ENCODE measurements at regions of chr13 and their contacts with region 1.

Region 1: DNA sequence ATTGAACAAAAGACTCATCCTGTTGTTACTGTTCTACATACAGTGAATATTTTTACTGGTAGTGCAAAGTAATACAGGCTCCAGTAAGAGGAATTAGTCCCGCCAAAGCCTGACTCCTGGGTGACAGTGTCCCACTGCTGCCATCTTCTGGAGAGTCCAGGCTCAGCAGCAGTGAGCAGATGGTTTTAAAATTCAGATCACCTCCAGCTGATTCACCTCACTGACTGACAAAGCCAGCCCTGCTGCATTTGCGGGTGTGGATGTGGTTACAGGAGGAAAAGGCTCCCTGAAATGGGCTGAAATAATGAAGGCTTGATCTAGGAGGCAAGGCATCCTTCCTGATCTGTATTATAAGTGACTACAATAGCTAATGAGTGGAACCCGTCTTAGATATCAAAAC is 18.3 kb downstream of the PABPC3 start:
- DNase-seq: no peak
- ATAC-seq: peak; percentile 70

Region 2: GRCh38 chr13:23888658-23889614 is 1225.3 kb before region 1 on chr13 and contains the start of gene MIPEP:
- intact Hi-C with region 1: no loop called
- DNase-seq: peak; percentile 96
- ATAC-seq: peak; percentile 99
- total RNA-seq, gene MIPEP: 37.7 TPM

Region 3: DNA sequence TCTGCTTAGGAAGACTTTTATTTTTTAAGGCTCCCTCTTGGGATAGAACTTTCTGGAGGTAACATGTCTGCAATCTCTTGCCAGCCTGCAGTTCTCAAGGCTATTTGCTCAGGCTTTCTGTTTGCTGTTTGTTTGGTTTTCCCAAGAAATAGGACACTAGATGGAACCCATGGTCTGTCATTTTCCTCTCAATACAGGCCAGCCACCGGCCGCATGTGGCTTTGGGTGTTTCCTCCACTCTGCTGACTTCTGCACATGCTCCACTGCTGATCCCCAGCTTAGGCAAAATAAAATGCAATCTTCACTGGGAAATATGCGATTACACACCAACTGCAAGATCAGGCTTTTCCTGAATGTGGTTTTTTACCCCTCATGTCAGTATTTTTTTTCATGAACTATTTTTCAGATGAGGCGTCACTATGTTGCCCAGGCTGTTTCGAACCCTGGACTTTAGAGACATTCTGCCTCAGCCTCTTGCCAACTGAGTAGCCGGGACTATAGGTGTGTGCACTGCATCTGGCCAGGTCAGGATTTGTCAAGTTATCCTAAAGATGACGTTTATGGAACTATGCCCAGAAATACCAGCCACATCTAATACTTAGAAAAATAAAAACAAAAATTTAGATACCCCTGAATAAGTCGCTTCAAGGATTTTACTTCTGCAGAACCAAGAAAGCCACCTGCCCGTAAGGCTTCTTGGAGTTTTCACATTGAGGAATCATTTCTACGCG is 112.6 kb before region 1 on chr13:
- intact Hi-C with region 1: loop called (anchors 5 kb)
- DNase-seq: no peak
- ATAC-seq: no peak

Region 4: GRCh38 chr13:25085125-25085742 is 29.0 kb before region 1 on chr13:
- intact Hi-C with region 1: loop called (anchors 1 kb)
- DNase-seq: no peak
- ATAC-seq: no peak

Measured in Right ventricle myocardium inferior (tissue), 1 donor.